GM13976 (cell line): ENCODE measurements at regions of chr1 and their contacts with region 1.

Region 1: DNA sequence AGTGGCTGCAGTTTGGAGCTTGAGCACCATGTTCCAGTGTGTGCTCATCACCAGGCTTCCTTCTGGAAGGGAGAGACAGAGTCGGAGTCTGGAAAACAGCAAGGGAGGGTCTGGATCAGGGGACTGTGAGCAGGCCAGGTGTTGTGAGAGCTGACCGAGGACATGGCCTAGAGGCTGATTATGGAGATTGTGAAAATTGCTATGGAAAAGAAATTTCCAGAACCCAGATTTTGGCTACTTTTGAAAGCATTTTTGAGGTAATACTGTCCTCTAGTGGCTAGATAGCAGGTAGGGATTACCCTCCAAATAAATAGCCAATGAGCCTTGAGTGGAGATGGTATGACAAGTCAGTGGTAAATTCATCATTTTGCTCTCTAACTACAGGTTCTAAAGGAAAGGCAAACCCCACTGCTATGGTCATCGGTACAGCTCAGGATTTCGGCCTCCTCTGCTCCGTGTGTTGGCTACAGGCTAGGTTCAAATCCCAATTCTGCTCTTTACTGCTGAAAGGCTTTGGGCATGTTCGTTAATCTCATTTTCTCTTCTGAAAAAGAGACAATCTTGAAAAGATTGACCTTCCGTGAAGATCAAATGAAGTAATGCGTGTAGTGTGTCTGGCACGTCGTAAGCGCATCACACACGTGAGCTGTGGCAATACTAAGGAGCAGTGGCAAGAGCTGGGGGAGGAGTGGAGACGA is 1.0 kb upstream of the HAO2 start:
- DNase-seq: peak; percentile 62
- CTCF ChIP-seq: peak; percentile 69

Region 2: GRCh38 chr1:119286587-119287181 is 80.9 kb before region 1 on chr1:
- in situ Hi-C with region 1: loop called (anchors 5 kb)
- DNase-seq: peak; percentile 55
- CTCF ChIP-seq: peak; percentile 59